ENCODE measurements at regions of chr6 and their contacts with region 1.

Region 1: DNA sequence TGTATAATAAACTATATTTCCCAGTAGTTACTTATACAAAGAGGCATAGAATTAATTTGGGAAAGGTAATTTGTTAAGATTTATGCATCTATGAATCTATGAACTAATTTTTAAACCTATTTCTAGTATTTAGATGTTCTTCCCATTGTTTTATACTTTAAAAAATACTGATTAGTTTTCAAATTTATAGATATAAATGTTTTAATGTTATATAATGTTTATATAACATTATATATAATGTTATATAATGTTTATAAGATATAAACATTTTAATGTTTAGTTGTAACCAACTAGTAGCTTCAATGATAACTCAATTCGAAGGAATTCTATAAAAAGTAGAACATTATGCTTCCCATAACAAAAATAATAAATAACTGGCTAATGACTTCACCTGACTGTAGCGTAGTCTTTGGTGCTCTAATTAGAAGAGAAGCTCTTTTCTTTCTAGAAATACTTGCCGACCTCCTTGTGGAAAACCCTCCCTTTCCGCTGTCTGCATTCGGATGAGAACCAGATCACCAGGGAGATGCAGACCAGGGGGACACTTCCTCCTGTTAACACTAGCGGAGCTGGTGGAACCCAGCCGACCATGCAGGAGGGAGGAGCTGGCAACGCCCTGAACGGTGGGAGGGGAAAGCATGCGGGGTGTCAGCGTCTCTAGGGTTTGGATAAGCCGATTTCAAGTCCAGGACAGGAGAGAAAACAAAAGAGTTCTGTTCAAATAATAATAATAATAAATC is 158.4 kb downstream of the OR2B2 start:
- DNase-seq: no peak
- H3K4me3 ChIP-seq: peak overlapping the region; percentile 56
- CTCF ChIP-seq: peak; percentile 23

Region 2: GRCh38 chr6:27188885-27189418 is 564.9 kb before region 1 on chr6:
- CTCF ChIA-PET with region 1: interaction called, 11 read pairs
- POLR2A ChIA-PET with region 1: no interaction called
- DNase-seq: peak; percentile 24
- H3K4me3 ChIP-seq: peak overlapping the region; percentile 75
- CTCF ChIP-seq: peak; percentile 51

Region 3: GRCh38 chr6:27518881-27519795 is 234.7 kb before region 1 on chr6:
- CTCF ChIA-PET with region 1: interaction called, 37 read pairs
- POLR2A ChIA-PET with region 1: interaction called, 4 read pairs
- DNase-seq: peak; percentile 63
- H3K4me3 ChIP-seq: peak overlapping the region; percentile 78
- CTCF ChIP-seq: peak; percentile 76

Region 4: GRCh38 chr6:27642744-27643456 is 110.9 kb before region 1 on chr6:
- CTCF ChIA-PET with region 1: no interaction called
- POLR2A ChIA-PET with region 1: no interaction called
- DNase-seq: no peak
- H3K4me3 ChIP-seq: no peak overlapping the region
- CTCF ChIP-seq: no peak

Region 5: DNA sequence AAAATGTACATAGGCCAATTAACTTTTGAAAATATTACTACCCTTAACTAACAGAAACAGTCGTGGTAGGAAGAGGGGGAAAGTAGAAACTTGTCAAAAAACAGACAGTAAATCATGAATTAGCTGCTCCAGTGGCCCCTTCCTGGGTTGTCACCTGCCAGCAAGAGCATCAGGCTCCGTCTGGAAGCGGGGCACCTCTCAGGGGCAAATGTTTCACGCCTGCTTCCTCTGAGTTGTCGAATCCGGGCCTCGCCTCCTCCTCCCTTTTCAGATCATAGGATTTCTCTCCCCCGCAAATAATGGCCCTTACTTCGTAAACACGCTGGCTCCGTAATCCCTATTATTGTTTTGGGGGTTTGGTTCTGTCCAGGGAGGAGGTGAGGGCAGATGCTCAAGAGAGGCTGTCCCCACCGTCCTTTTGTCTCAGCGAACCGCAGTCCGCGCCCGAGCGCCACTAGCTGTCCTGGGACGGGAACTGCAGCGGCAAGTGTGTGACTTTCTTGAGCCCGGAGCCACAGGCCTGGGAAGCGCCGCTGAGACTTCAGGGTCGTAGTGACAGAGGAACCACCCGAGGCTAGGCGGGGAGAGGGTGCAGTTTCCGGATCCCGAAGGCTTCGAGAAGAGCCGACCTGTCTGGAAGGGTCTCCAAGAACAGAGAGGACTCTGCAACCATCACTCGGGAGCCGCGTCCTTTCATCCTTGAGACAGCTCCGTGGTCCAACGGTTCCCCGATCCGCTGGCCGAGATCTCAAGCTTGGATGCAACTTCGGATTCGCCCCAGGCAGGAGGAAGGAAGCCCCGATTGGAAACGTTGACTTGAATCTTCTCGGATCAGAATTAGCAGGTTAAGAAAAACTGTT is 66.5 kb before region 1 on chr6:
- CTCF ChIA-PET with region 1: interaction called, 10 read pairs
- POLR2A ChIA-PET with region 1: no interaction called
- DNase-seq: no peak
- H3K4me3 ChIP-seq: peak overlapping the region; percentile 77
- CTCF ChIP-seq: peak; percentile 84

Region 6: DNA sequence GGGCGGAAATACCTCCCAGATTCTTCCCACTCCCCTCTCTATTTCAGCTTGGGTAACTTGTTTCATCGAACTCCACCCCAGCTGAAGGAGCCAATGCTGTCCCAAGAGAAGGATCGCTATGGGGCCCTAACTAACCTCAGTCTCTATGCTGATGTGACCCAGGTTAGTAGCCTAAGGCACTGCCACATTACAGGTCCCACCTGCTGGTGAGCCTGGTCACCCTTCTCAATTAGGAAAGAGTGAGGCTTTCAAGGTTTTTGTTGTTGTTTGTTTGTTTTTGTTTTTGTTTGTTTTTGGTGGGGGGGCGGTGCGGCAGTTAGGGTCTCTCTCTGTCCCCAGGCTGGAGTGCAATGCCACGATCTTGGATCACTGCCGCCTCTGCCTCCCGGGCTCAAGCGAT is 10.0 kb before region 1 on chr6:
- CTCF ChIA-PET with region 1: interaction called, 10 read pairs
- POLR2A ChIA-PET with region 1: no interaction called
- DNase-seq: no peak
- H3K4me3 ChIP-seq: no peak overlapping the region
- CTCF ChIP-seq: no peak

Region 7: GRCh38 chr6:27772261-27773001 is 18.6 kb after region 1 on chr6:
- CTCF ChIA-PET with region 1: interaction called, 78 read pairs
- POLR2A ChIA-PET with region 1: no interaction called
- DNase-seq: peak; percentile 37
- H3K4me3 ChIP-seq: peak overlapping the region; percentile 36
- CTCF ChIP-seq: peak; percentile 98